Natural killer cell (primary cell): ENCODE measurements at regions of chr5 and their contacts with region 1.

Region 1: GRCh38 chr5:140372971-140373487 is 13.0 kb downstream of the SLC4A9 start:
- DNase-seq: peak; percentile 22 to 68
- ATAC-seq: peak; percentile 65 to 85 (median 76)
- H3K4me3 ChIP-seq: no peak overlapping the region
- H3K4me3 Mint-ChIP-seq: no peak overlapping the region
- H3K27ac ChIP-seq: no peak overlapping the region
- H3K27ac Mint-ChIP-seq: peak overlapping the region in 1 of 2 donors; percentile 6
- H3K4me1 ChIP-seq: peaks cover 5% of the 10 kb centered on the region
- H3K4me1 Mint-ChIP-seq: peaks cover 0 to 7% of the 10 kb centered on the region in 2 donors
- H3K27me3 ChIP-seq: no peaks in the 10 kb centered on the region
- H3K27me3 Mint-ChIP-seq: no peaks in the 10 kb centered on the region
- CTCF ChIP-seq: peak; percentile 83

Region 2: DNA sequence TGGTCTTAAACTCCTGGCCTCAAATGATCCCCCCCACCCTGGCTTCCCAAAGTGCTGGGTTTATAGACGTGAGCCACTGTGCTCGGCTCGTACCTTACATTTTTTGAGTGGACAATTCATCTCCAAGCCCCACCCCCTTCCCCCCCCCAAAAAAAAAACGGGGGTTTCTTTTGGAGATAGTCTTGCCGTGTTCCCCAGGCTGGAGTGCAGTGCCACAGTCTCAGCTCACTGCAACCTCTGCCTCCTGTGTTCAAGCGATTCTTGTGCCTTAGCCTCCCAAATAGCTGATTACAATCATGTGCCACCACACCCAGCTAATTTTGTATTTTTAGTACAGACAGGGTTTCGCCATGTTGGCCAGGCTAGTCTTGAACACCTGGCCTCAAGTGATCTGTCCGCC is 59.9 kb after region 1 on chr5:
- intact Hi-C with region 1: no loop called
- DNase-seq: no peak
- ATAC-seq: no peak
- H3K4me3 ChIP-seq: no peak overlapping the region
- H3K4me3 Mint-ChIP-seq: no peak overlapping the region
- H3K27ac ChIP-seq: no peak overlapping the region
- H3K27ac Mint-ChIP-seq: peak overlapping the region in 1 of 2 donors; percentile 25
- H3K4me1 ChIP-seq: peaks cover 3% of the 10 kb centered on the region
- H3K4me1 Mint-ChIP-seq: peaks cover 40 to 43% of the 10 kb centered on the region in 2 donors
- H3K27me3 ChIP-seq: no peaks in the 10 kb centered on the region
- H3K27me3 Mint-ChIP-seq: no peaks in the 10 kb centered on the region
- CTCF ChIP-seq: no peak

Region 3: GRCh38 chr5:140542972-140543371 is 169.9 kb after region 1 on chr5:
- intact Hi-C with region 1: no loop called
- DNase-seq: no peak
- ATAC-seq: no peak
- H3K4me3 ChIP-seq: no peak overlapping the region
- H3K4me3 Mint-ChIP-seq: no peak overlapping the region
- H3K27ac ChIP-seq: no peak overlapping the region
- H3K27ac Mint-ChIP-seq: no peak overlapping the region
- H3K4me1 ChIP-seq: peaks cover 12% of the 10 kb centered on the region
- H3K4me1 Mint-ChIP-seq: peaks cover 4 to 9% of the 10 kb centered on the region in 2 donors
- H3K27me3 ChIP-seq: no peaks in the 10 kb centered on the region
- H3K27me3 Mint-ChIP-seq: no peaks in the 10 kb centered on the region
- CTCF ChIP-seq: no peak

Region 4: DNA sequence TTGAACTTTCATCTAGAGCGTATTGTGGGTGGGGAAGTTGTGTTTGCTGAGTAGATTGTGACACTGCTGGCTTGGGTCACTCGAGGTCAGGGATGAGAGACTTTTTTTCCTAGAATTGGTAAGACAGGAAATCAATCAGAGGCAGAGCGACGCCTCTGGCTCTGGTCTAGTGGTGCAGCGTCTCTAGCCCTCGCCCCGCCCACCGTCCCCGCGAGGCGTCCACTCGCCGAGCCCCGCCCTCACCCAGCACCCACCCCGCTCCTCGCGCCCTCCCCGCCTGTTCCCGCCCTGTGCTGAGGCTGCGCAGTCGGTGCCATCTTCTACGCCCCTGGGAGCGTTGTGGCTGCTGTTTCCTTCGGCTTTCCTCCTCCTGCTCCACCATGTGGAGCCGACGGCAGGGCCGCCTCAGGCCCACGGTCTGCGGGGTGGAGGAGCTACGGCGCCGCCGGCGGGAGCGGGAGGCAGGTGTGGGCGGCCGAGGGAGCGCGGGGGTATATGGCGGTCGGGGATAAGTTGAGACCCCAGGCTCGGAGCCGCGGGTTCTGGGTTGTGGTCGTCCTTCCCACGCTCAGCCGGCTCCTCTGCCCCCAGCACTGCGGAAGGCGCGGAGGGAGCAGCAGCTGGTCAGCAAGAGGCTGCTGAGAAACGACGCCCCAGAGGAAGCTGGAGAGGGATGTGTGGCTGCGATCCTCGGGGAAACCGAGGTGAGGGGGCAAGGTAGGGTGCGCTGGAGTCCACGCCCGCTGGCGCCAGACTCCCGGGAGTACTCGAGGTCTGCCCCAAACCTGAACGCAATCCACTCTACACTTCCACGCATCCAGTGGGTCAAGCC is 266.3 kb after region 1 on chr5 and contains the start of gene TMCO6:
- intact Hi-C with region 1: no loop called
- DNase-seq: peak; percentile 94 to 98
- ATAC-seq: peak; percentile 98 to 100 (median 99)
- H3K4me3 ChIP-seq: peak within 1 kb of the TSS; percentile 65
- H3K4me3 Mint-ChIP-seq: peak within 1 kb of the TSS; percentile 92
- H3K27ac ChIP-seq: peak within 1 kb of the TSS; percentile 84
- H3K27ac Mint-ChIP-seq: peak within 1 kb of the TSS; percentile 93 to 95
- H3K4me1 ChIP-seq: peaks cover 18% of the 10 kb centered on the region
- H3K4me1 Mint-ChIP-seq: peaks cover 15 to 35% of the 10 kb centered on the region in 2 donors
- H3K27me3 ChIP-seq: no peaks in the 10 kb centered on the region
- H3K27me3 Mint-ChIP-seq: no peaks in the 10 kb centered on the region
- CTCF ChIP-seq: peak; percentile 61
- total RNA-seq, gene TMCO6: 17.9 to 19.5 (median 18.8) TPM

Region 5: DNA sequence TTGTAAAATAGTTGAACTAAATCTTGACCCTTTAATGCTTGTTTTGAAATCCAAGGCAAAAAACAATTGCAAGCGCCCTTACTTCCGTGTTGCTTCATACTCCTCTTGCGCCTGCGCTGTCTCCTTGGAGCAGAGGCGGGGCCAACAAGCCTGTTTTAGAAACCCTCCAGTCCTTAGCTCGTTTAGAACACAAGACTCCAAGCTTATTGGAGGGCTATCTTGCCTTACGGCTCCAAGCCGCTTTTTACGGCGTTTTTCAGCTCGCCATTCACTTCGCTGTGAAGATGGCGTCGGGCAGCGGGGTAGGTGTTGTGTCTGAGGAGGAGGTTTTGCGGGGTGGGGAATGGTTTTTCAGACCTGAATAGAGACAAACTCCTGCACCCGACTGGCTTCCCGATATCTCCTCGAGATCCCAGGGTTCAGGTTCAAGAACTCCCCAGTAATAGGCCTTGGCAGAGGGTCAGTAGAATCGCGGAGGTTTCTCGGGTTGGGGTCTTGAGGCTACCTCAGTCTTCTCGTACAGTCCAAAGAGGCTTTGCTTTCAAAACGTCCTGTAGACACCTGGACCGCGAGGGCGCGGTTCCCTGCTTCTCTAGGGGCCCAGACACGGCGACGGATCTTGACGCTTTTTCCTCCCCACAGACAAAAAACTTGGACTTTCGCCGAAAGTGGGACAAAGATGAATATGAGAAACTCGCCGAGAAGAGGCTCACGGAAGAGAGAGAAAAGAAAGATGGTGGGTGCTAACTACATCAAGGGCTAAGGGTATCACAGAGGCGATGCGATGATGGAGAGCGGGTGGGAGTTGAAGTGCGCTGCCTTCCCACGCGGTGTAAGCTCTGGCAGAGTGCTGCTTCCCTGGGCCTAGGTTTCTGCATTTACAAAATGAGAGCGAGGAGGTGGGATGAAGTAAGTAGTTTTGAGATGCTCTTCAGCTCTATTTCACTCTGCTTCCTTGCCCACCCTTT is 327.4 kb after region 1 on chr5 and contains the start of gene ZMAT2:
- intact Hi-C with region 1: no loop called
- DNase-seq: peak; percentile 89 to 98
- ATAC-seq: peak; percentile 98 to 100 (median 99)
- H3K4me3 ChIP-seq: peak within 1 kb of the TSS; percentile 65
- H3K4me3 Mint-ChIP-seq: peak within 1 kb of the TSS; percentile 87
- H3K27ac ChIP-seq: peak within 1 kb of the TSS; percentile 76
- H3K27ac Mint-ChIP-seq: peak within 1 kb of the TSS; percentile 94 to 97
- H3K4me1 ChIP-seq: peaks cover 15% of the 10 kb centered on the region
- H3K4me1 Mint-ChIP-seq: peaks cover 23 to 34% of the 10 kb centered on the region in 2 donors
- H3K27me3 ChIP-seq: no peaks in the 10 kb centered on the region
- H3K27me3 Mint-ChIP-seq: no peaks in the 10 kb centered on the region
- CTCF ChIP-seq: no peak
- total RNA-seq, gene ZMAT2: 47.0 to 50.4 (median 49.5) TPM

Region 6: DNA sequence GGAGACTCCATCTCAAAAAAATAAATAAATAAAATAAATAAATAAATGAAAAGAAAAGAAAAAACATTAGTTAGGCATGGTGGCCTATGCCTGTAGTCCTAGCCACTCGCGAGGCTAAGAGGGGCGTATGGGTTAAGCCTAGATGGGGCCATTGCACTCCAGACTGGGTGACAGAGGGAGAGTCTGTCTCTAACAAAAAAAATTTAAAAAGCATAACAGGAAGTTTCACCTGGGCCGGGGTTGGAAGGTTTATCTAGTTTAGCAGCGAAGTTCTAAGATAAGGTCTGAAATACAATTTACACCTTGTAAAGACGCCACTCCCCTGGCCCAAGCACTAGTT is 345.2 kb after region 1 on chr5:
- intact Hi-C with region 1: loop called (anchors 1 kb)
- DNase-seq: no peak
- ATAC-seq: no peak
- H3K4me3 ChIP-seq: no peak overlapping the region
- H3K4me3 Mint-ChIP-seq: peak overlapping the region; percentile 65
- H3K27ac ChIP-seq: no peak overlapping the region
- H3K27ac Mint-ChIP-seq: peak overlapping the region in 1 of 2 donors; percentile 74
- H3K4me1 ChIP-seq: no peaks in the 10 kb centered on the region
- H3K4me1 Mint-ChIP-seq: peaks cover 8% of the 10 kb centered on the region in 2 donors
- H3K27me3 ChIP-seq: peaks cover 2% of the 10 kb centered on the region
- H3K27me3 Mint-ChIP-seq: peaks cover 12 to 13% of the 10 kb centered on the region in 2 donors
- CTCF ChIP-seq: no peak